ENCODE measurements at regions of chr1 and their contacts with region 1.

Region 1: GRCh38 chr1:2255420-2256369 is 27.6 kb downstream of the SKI start:
- DNase-seq: peak; percentile 96
- ATAC-seq: peak; percentile 54
- H3K4me3 ChIP-seq: no peak overlapping the region
- H3K4me3 Mint-ChIP-seq: no peak overlapping the region
- H3K27ac ChIP-seq: peak overlapping the region; percentile 81 to 96
- H3K27ac Mint-ChIP-seq: no peak overlapping the region
- H3K4me1 ChIP-seq: peaks cover 56 to 82% of the 10 kb centered on the region in 2 donors
- H3K4me1 Mint-ChIP-seq: peaks cover 51% of the 10 kb centered on the region
- H3K27me3 ChIP-seq: no peaks in the 10 kb centered on the region
- H3K27me3 Mint-ChIP-seq: no peaks in the 10 kb centered on the region
- CTCF ChIP-seq: no peak

Region 2: DNA sequence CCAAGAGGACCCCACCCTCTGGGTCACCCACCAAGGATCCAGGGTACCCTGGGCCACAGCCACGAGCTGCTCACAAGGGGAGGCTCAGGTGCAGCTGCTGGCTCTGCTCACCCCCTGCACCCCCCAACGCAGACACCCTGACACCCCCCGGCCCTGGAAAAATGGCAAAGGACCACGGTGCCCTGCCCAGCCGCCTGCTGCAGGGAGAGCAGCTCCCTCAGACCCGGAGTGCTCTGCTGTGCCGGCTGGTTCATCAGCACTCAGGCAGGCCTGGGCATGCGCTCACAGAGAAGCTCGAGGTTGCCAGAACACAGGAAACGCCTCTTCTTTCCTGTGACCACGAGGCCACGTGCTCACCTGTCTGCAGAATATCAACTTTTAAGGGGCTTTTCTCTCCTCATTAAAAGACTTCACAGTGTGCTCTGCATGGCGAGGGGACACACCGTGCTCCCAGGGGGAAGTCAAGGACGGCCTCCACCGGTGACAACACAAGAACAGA is 1004.9 kb before region 1 on chr1:
- CTCF ChIA-PET with region 1: no interaction called
- POLR2A ChIA-PET with region 1: no interaction called
- intact Hi-C with region 1: no loop called
- DNase-seq: peak; percentile 85
- ATAC-seq: peak; percentile 71
- H3K4me3 ChIP-seq: no peak overlapping the region
- H3K4me3 Mint-ChIP-seq: peak overlapping the region; percentile 63
- H3K27ac ChIP-seq: peak overlapping the region; percentile 11 to 84
- H3K27ac Mint-ChIP-seq: peak overlapping the region; percentile 88
- H3K4me1 ChIP-seq: peaks cover 27 to 30% of the 10 kb centered on the region in 2 donors
- H3K4me1 Mint-ChIP-seq: peaks cover 16% of the 10 kb centered on the region
- H3K27me3 ChIP-seq: peaks cover 0 to 16% (median 8%) of the 10 kb centered on the region in 4 experiments
- H3K27me3 Mint-ChIP-seq: no peaks in the 10 kb centered on the region
- CTCF ChIP-seq: no peak

Region 3: GRCh38 chr1:2233997-2234761 is 21.5 kb before region 1 on chr1:
- CTCF ChIA-PET with region 1: interaction called, 8 read pairs
- POLR2A ChIA-PET with region 1: interaction called, 8 read pairs
- intact Hi-C with region 1: loop called (anchors 1 kb)
- DNase-seq: peak; percentile 78
- ATAC-seq: peak; percentile 79
- H3K4me3 ChIP-seq: peak overlapping the region in 4 of 5 experiments; percentile 3 to 49 (median 36)
- H3K4me3 Mint-ChIP-seq: peak overlapping the region; percentile 86
- H3K27ac ChIP-seq: peak overlapping the region; percentile 31 to 93
- H3K27ac Mint-ChIP-seq: peak overlapping the region; percentile 97
- H3K4me1 ChIP-seq: peaks cover 77 to 96% of the 10 kb centered on the region in 2 donors
- H3K4me1 Mint-ChIP-seq: peaks cover 81% of the 10 kb centered on the region
- H3K27me3 ChIP-seq: no peaks in the 10 kb centered on the region
- H3K27me3 Mint-ChIP-seq: no peaks in the 10 kb centered on the region
- CTCF ChIP-seq: no peak

Region 4: GRCh38 chr1:2242814-2243725 is 12.6 kb before region 1 on chr1:
- CTCF ChIA-PET with region 1: interaction called, 3 read pairs
- POLR2A ChIA-PET with region 1: no interaction called
- intact Hi-C with region 1: loop called (anchors 1 kb)
- DNase-seq: no peak
- ATAC-seq: no peak
- H3K4me3 ChIP-seq: no peak overlapping the region
- H3K4me3 Mint-ChIP-seq: no peak overlapping the region
- H3K27ac ChIP-seq: no peak overlapping the region
- H3K27ac Mint-ChIP-seq: peak overlapping the region; percentile 13
- H3K4me1 ChIP-seq: peaks cover 24 to 47% of the 10 kb centered on the region in 2 donors
- H3K4me1 Mint-ChIP-seq: peaks cover 57% of the 10 kb centered on the region
- H3K27me3 ChIP-seq: no peaks in the 10 kb centered on the region
- H3K27me3 Mint-ChIP-seq: no peaks in the 10 kb centered on the region
- CTCF ChIP-seq: no peak

Region 5: DNA sequence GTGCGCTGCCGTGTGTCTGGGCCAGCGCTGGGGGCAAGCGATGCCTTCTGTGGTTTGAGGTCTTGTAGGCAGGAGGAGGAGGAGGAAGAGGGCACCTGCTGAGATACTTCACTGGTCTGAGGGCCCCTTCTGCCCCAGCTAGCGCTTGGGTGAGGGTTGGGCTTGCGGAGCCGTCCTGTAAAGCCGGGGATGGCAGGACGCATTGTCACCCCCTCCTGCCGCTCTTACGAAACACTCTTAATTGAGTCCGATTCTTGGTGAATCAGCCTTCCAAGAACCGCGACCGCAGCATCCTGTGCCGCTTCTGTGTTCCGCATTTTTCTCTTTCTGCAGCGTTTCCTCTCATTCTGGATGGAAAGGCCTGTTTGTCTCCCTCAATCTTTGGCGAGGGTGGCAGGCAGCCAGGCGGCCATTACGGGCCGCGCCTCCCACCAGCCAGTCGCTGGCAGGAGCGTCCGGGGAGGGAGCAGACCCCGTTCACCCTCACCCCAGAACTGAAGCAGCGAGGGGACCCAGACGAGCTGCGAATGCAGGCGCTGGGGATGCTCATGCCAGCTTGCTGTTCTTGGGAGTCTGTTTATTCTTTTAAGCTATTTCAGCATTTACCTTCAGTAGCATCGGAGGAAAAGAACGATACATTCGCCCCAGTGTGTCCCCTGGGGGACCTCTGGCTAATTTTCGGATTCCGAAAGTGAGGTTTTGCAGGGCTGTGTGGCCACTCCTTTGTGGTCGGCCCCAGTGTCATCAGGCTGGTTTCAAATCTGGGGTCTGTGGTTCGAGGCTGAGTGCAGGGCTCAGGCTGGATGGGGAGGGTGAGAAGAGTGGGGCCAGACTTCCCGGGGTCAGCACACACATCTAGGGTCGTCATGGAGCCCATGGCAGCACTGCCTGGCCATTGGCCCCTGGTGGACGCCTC is 35.2 kb after region 1 on chr1:
- CTCF ChIA-PET with region 1: no interaction called
- POLR2A ChIA-PET with region 1: interaction called, 5 read pairs
- intact Hi-C with region 1: loop called (anchors 2 kb)
- DNase-seq: peak; percentile 89
- ATAC-seq: peak; percentile 81
- H3K4me3 ChIP-seq: peak overlapping the region in 4 of 5 experiments; percentile 36 to 54 (median 42)
- H3K4me3 Mint-ChIP-seq: peak overlapping the region; percentile 83
- H3K27ac ChIP-seq: peak overlapping the region; percentile 29 to 73
- H3K27ac Mint-ChIP-seq: peak overlapping the region; percentile 84
- H3K4me1 ChIP-seq: peaks cover 57 to 77% of the 10 kb centered on the region in 2 donors
- H3K4me1 Mint-ChIP-seq: peaks cover 79% of the 10 kb centered on the region
- H3K27me3 ChIP-seq: no peaks in the 10 kb centered on the region
- H3K27me3 Mint-ChIP-seq: no peaks in the 10 kb centered on the region
- CTCF ChIP-seq: no peak

Region 6: GRCh38 chr1:2391041-2391930 is 135.6 kb after region 1 on chr1 and contains the starts of genes MORN1 and RER1:
- CTCF ChIA-PET with region 1: no interaction called
- POLR2A ChIA-PET with region 1: no interaction called
- intact Hi-C with region 1: loop called (anchors 1 kb)
- DNase-seq: peak; percentile 99
- ATAC-seq: peak; percentile 94
- H3K4me3 ChIP-seq: peak within 1 kb of the TSS; percentile 61 to 92 (median 76)
- H3K4me3 Mint-ChIP-seq: peak within 1 kb of the TSS; percentile 92
- H3K27ac ChIP-seq: peak within 1 kb of the TSS; percentile 24 to 88
- H3K27ac Mint-ChIP-seq: peak within 1 kb of the TSS; percentile 88
- H3K4me1 ChIP-seq: peaks cover 25 to 47% of the 10 kb centered on the region in 2 donors
- H3K4me1 Mint-ChIP-seq: peaks cover 47% of the 10 kb centered on the region
- H3K27me3 ChIP-seq: no peaks in the 10 kb centered on the region
- H3K27me3 Mint-ChIP-seq: no peaks in the 10 kb centered on the region
- CTCF ChIP-seq: no peak
- total RNA-seq, gene MORN1: 30.4 and 32.6 TPM in 2 replicates
- total RNA-seq, gene RER1: 117 and 118 TPM in 2 replicates

Region 7: DNA sequence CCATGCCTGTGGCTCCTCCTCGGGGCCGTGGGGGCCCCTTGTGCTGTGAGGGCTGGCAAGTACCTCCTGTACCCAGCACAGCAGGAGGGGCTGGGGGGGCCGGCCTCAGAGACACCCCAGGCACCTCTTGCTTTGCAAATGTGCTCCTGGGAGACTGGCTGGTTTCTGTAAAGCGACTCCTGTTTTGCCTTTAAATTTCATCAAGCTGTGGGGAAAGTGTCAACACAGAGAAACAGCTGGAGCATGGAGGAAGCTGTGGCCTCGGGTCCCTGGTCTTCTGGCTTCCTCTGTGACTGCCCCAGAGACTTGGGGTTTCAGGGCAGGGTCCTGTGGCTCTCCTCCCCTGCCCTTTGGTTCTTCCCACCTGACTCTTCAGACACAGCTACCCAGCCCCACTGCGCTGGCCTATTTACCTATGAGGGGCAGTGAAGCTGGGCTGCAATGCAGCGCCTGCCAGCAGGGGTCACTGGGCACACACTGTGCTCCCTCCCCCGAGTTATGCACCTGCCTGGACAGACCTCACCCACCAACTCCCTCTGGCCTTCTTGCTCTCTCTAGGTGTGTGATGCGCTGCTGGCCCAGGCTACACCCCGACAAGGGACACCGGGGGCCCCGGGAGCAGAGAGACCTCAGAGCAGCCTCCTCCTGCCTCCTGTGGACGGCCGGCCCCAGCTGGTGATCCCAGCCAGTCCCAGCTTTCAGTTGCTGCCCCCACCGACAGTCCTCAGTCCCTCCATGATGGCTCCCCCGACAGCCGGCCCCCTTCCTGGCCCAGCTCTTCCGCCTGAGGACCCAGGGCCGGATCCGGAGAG is 174.3 kb after region 1 on chr1:
- CTCF ChIA-PET with region 1: no interaction called
- POLR2A ChIA-PET with region 1: no interaction called
- intact Hi-C with region 1: no loop called
- DNase-seq: no peak
- ATAC-seq: no peak
- H3K4me3 ChIP-seq: no peak overlapping the region
- H3K4me3 Mint-ChIP-seq: no peak overlapping the region
- H3K27ac ChIP-seq: no peak overlapping the region
- H3K27ac Mint-ChIP-seq: no peak overlapping the region
- H3K4me1 ChIP-seq: no peaks in the 10 kb centered on the region
- H3K4me1 Mint-ChIP-seq: no peaks in the 10 kb centered on the region
- H3K27me3 ChIP-seq: peaks cover 0 to 10% (median 0%) of the 10 kb centered on the region in 4 experiments
- H3K27me3 Mint-ChIP-seq: no peaks in the 10 kb centered on the region
- CTCF ChIP-seq: no peak

Measured in B cell (primary cell).